ENCODE measurements at regions of chr11 and their contacts with region 1.

Region 1: DNA sequence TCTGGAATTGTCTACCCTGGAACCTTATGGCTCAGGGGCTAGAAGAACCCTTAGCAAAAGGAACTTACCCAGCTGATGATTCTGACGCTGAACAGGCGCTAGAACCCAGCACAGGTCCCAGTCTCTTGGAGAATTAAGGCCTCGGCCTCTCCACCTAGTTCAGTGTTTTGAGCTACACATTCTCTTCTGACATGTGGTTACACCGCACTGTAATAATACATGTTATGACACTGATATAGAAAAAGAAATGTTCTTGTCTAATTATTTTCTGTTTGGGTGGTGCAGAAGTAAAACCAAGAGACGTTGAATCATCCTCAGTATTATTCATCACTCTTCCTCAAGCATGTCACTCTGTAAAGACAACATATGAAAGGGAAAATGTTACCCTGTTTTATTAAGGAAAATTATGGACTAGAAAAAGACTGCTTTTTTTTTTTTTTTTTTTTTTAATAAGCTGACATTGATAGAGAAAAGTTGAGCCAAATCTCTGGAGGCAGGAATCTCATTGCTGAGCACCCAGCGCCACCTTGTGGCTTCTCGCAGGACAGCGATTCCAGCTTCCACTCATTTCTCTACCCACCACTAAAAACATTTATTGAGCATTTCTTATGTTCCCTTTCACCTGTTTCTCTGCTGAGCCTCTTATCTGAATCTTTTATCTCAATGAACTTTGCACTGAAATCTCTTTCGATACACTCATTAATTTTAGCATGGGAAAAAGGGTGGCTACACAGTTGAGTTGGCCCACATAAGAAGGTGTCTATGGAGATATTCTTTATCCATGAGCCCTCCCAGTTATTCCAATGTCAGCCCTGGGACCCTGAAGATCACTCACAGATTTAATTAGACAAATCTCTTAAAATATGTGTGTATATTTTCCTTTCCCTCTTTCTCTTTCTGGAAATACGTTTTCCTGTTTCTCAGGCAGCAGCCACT is 12.6 kb upstream of the APLNR start:
- DNase-seq: peak; percentile 31 to 68
- ATAC-seq: peak; percentile 70 to 81
- H3K4me3 ChIP-seq: no peak overlapping the region
- H3K27ac ChIP-seq: peak overlapping the region; percentile 89 to 90
- H3K4me1 ChIP-seq: peaks cover 11% of the 10 kb centered on the region
- CTCF ChIP-seq: peak; percentile 97
- EP300 ChIP-seq: no peak
- POLR2A ChIP-seq: no peak
- RAD21 ChIP-seq: peak; percentile 93 to 95

Region 2: DNA sequence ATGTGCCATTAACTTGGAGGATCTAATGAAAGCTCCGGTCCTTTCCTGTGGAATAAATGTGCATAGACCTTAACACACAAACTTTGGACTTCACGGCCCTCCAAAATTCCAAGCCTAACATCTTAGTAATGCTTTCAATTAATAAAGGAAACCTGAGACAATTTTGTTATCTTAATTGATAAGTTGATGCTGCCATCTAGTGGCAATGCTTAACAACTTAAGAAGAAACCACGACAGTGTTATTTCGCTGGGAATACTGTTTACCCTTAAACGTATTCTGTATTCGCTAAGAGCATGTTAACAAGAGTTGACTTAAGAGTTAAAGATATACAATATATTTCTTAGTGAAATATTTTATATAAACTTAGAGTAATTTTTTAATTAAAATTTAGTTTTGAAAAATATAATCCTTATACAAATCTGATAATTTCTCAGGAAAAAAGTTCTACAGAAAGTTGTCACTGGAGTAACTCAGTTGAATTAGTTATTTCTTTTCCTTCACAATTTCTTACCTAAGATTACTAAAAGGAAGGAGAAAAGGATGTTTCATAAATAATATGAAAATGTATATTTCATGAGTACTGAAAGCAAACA is 466.1 kb before region 1 on chr11:
- CTCF ChIA-PET with region 1: interaction called, 15 read pairs
- POLR2A ChIA-PET with region 1: no interaction called
- DNase-seq: peak; percentile 25 to 79
- ATAC-seq: peak; percentile 64 to 71; a peak in 5 of 6 replicates
- H3K4me3 ChIP-seq: peak overlapping the region; percentile 30
- H3K27ac ChIP-seq: no peak overlapping the region
- H3K4me1 ChIP-seq: no peaks in the 10 kb centered on the region
- CTCF ChIP-seq: peak; percentile 87
- EP300 ChIP-seq: no peak
- POLR2A ChIP-seq: no peak
- RAD21 ChIP-seq: peak; percentile 76 to 87

Region 3: DNA sequence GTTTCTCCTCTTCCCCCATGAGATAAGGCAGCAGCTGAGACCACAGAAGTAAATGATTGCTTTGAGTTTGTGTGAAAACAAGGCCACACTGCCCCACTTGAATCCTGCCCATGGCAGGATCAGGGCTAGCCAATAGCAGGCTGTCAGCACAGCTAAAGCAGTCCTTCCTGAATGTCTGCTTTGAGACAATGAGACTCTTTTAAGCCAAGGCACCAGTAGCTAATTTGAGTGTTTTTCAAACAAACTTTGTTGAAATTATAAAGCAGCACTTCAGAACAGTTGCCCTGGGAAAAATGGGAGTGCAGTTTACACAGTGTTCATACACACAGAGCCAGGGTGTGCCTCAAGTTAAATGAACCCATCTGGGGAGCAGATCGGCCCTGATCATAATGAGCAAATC is 364.5 kb before region 1 on chr11:
- CTCF ChIA-PET with region 1: interaction called, 11 read pairs
- POLR2A ChIA-PET with region 1: no interaction called
- DNase-seq: peak in 1 of 2 experiments; percentile 60
- ATAC-seq: peak; percentile 62 to 65; a peak in 3 of 6 replicates
- H3K4me3 ChIP-seq: no peak overlapping the region
- H3K27ac ChIP-seq: peak overlapping the region; percentile 73 to 77
- H3K4me1 ChIP-seq: peaks cover 43% of the 10 kb centered on the region
- CTCF ChIP-seq: no peak
- EP300 ChIP-seq: no peak
- POLR2A ChIP-seq: no peak
- RAD21 ChIP-seq: no peak

Region 4: GRCh38 chr11:57094181-57094935 is 155.3 kb before region 1 on chr11:
- CTCF ChIA-PET with region 1: interaction called, 13 read pairs
- POLR2A ChIA-PET with region 1: no interaction called
- DNase-seq: peak in 1 of 2 experiments; percentile 23
- ATAC-seq: peak in 1 of 2 experiments; percentile 56; a peak in 2 of 6 replicates
- H3K4me3 ChIP-seq: no peak overlapping the region
- H3K27ac ChIP-seq: peak overlapping the region in 1 of 2 experiments; percentile 54; a peak in 2 of 6 replicates
- H3K4me1 ChIP-seq: peaks cover 14% of the 10 kb centered on the region; the same call in 2 of the 3 replicates
- CTCF ChIP-seq: no peak
- EP300 ChIP-seq: no peak
- POLR2A ChIP-seq: no peak
- RAD21 ChIP-seq: no peak

Region 5: DNA sequence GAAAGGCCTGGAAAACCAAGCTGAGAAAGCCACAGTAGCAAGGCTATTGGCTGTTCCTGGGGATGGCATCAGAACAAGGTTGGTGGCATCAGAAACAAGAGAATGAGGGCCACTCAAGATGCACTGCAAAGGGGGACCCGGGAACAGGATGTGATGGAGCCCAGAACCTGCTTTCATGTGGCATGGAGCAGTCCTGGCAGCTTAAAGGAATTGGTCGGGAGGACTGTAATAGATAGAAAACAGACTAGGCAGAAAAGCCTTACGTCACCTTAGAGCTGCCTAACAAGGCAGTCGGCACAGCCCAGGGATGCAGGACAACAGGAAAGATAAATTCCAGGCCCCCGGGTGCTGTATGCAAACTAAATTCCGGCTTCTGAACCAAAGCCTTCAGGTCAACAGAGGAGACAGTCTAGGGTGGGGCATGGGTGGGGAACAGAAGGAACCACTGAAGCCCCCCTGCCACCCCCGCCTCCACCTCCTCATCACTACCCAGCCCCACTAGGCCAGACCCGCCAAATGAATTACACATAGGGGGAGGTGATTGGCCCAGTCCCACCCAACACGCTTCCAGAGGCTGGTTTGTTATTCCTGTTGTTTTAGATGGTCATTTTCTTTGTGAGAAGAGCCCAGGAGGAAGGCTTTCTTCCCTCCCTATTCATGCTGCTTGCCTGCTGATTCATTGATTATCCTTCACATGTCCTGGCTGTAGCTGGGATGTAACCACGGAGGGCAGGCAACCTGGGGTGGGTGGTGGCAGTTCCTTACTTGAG is 93.6 kb before region 1 on chr11:
- CTCF ChIA-PET with region 1: interaction called, 10 read pairs
- POLR2A ChIA-PET with region 1: no interaction called
- DNase-seq: no peak
- ATAC-seq: no peak; a peak in 1 of 6 replicates
- H3K4me3 ChIP-seq: no peak overlapping the region
- H3K27ac ChIP-seq: peak overlapping the region in 1 of 2 experiments; percentile 31; a peak in 1 of 6 replicates
- H3K4me1 ChIP-seq: peaks cover 9% of the 10 kb centered on the region; the same call in 2 of the 3 replicates
- CTCF ChIP-seq: no peak
- EP300 ChIP-seq: no peak
- POLR2A ChIP-seq: no peak
- RAD21 ChIP-seq: no peak

Region 6: GRCh38 chr11:57237204-57237681 is 12.4 kb before region 1 on chr11 and contains the start of gene APLNR:
- CTCF ChIA-PET with region 1: interaction called, 55 read pairs
- POLR2A ChIA-PET with region 1: no interaction called
- DNase-seq: no peak
- ATAC-seq: no peak
- H3K4me3 ChIP-seq: no peak within 1 kb of the TSS
- H3K27ac ChIP-seq: 0 out of 6 replicates have a peak within 1 kb of the TSS, but pooled peaks of 1 of the 2 experiments have one; percentile 24
- H3K4me1 ChIP-seq: peaks cover 15% of the 10 kb centered on the region; the same call in 2 of the 3 replicates
- CTCF ChIP-seq: no peak
- EP300 ChIP-seq: no peak
- POLR2A ChIP-seq: no peak
- RAD21 ChIP-seq: no peak
- polyA plus RNA-seq, gene APLNR: 0.08 and 0.14 TPM in 2 replicates

Region 7: GRCh38 chr11:57324886-57325734 is 75.5 kb after region 1 on chr11 and contains the start of gene TNKS1BP1:
- CTCF ChIA-PET with region 1: interaction called, 12 read pairs
- POLR2A ChIA-PET with region 1: interaction called, 6 read pairs
- DNase-seq: peak; percentile 94 to 97
- ATAC-seq: peak; percentile 63 to 81
- H3K4me3 ChIP-seq: peak within 1 kb of the TSS; percentile 64
- H3K27ac ChIP-seq: peak within 1 kb of the TSS; percentile 91 to 99
- H3K4me1 ChIP-seq: peaks cover 42% of the 10 kb centered on the region
- CTCF ChIP-seq: no peak
- EP300 ChIP-seq: no peak
- POLR2A ChIP-seq: peak; percentile 32
- RAD21 ChIP-seq: no peak
- polyA plus RNA-seq, gene TNKS1BP1: 35.0 and 36.5 TPM in 2 replicates

Measured in A549 (cell line).